Activated CD4-positive, alpha-beta T cell treated with anti-CD3 and anti-CD28 coated beads for 36 hours (primary cell): ENCODE measurements at regions of chr19 and their contacts with region 1.

Region 1: DNA sequence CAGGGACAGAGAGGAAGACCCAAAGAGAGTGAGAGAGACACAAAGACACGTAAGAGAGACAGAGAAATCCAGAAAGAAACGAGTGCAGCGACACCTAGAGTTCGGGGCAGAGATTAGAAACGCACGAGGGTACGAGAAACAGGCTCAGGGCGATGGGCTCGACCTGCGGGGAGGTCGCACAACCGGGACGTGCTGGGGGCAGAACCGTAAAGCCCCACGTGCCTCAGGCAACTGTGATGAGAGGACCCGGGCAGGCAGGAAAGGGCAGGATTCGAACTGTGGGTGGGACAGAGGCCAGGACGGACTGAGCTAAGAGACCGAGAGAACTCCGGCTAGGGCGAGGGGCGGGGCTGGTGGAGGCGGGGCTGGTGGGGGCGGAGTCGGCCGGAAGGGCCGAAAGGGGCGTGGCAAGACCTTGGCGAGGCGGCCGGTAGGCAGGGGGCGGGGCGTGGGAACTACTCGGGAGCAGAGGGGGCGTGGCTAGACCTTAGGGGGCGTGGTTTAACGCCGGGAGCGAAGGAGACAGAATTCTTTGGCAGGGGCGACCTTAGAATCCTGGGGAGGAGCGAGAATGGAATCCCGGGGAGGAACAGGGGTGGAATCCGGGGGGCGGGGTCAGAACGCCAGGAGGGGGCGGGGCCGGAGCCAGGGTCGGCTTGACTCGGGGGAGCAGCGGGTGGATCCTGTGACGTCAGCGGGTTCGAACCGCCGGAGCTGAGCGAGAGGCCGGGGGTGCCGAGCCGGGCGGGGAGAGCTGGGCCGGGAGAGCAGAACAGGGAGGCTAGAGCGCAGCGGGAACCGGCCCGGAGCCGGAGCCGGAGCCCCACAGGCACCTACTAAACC is at the start of gene NECTIN2:
- DNase-seq: peak; percentile 98
- ATAC-seq: peak; percentile 77
- H3K4me3 Mint-ChIP-seq: peak within 1 kb of the TSS; percentile 73
- H3K27ac Mint-ChIP-seq: peak within 1 kb of the TSS; percentile 10
- H3K4me1 Mint-ChIP-seq: peaks cover 21% of the 10 kb centered on the region
- H3K27me3 Mint-ChIP-seq: peaks cover 21% of the 10 kb centered on the region
- total RNA-seq, gene NECTIN2: 0.80 to 0.93 TPM

Region 2: DNA sequence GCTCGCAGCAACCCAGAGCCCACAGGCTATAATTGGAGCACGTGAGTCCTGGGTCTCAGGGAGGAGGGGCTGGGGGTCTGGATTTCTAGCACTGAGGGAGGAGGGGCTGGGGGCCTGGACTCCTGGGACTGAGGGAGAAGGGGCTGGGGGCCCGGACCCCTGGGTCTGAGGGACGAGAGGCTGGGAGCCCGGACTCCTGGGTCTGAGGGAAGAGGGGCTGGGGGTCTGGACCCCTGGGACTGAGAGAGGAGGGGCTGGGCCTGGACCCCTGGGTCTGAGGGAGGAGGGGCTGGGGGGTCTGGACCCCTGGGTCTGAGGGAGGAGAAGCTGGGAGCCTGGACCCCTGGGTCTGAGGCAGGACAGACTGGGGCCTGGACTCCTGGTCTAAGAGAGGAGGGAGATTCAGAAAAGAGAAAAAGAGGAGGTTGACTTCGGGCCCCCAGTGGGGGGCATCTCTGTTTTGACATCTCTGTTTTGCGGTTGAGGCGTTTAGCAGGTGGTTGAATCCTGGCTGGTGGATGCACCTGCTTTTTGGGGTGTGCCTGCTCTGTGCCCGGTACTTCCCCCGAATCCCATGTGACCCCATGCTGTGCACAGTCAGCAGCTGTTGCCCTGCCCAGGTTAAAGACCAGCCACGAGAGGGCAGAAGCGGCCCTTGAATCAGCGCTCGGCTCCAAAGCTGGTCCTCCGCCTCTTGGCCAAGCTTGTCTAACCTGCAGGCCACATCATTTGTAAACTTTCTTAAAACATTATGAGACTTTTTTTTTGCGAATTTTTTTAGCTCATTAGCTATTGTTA is 191.7 kb before region 1 on chr19:
- CTCF ChIA-PET with region 1: no interaction called
- POLR2A ChIA-PET with region 1: no interaction called
- intact Hi-C with region 1: loop called in 1 of 2 experiments (anchors 1 kb)
- DNase-seq: peak; percentile 89
- ATAC-seq: peak; percentile 97
- H3K4me3 Mint-ChIP-seq: no peak overlapping the region
- H3K27ac Mint-ChIP-seq: no peak overlapping the region
- H3K4me1 Mint-ChIP-seq: peaks cover 11% of the 10 kb centered on the region
- H3K27me3 Mint-ChIP-seq: no peaks in the 10 kb centered on the region

Region 3: GRCh38 chr19:44746946-44747738 is 98.7 kb before region 1 on chr19:
- CTCF ChIA-PET with region 1: interaction called, 5 read pairs
- POLR2A ChIA-PET with region 1: no interaction called
- intact Hi-C with region 1: loop called in 1 of 2 experiments (anchors 1 kb)
- DNase-seq: peak; percentile 98
- ATAC-seq: peak; percentile 85
- H3K4me3 Mint-ChIP-seq: peak overlapping the region; percentile 91
- H3K27ac Mint-ChIP-seq: peak overlapping the region; percentile 95
- H3K4me1 Mint-ChIP-seq: peaks cover 43% of the 10 kb centered on the region
- H3K27me3 Mint-ChIP-seq: no peaks in the 10 kb centered on the region

Region 4: GRCh38 chr19:44777715-44778347 is 68.0 kb before region 1 on chr19 and contains the start of gene CBLC:
- CTCF ChIA-PET with region 1: no interaction called
- POLR2A ChIA-PET with region 1: no interaction called
- intact Hi-C with region 1: loop called in 1 of 2 experiments (anchors 5 kb)
- DNase-seq: no peak
- ATAC-seq: peak; percentile 36
- H3K4me3 Mint-ChIP-seq: no peak within 1 kb of the TSS
- H3K27ac Mint-ChIP-seq: no peak within 1 kb of the TSS
- H3K4me1 Mint-ChIP-seq: no peaks in the 10 kb centered on the region
- H3K27me3 Mint-ChIP-seq: no peaks in the 10 kb centered on the region
- total RNA-seq, gene CBLC: not detected

Region 5: GRCh38 chr19:44800461-44800860 is 45.4 kb before region 1 on chr19:
- CTCF ChIA-PET with region 1: no interaction called
- POLR2A ChIA-PET with region 1: no interaction called
- intact Hi-C with region 1: loop called (anchors 1 kb)
- DNase-seq: peak; percentile 92
- ATAC-seq: peak; percentile 98
- H3K4me3 Mint-ChIP-seq: no peak overlapping the region
- H3K27ac Mint-ChIP-seq: no peak overlapping the region
- H3K4me1 Mint-ChIP-seq: peaks cover 11% of the 10 kb centered on the region
- H3K27me3 Mint-ChIP-seq: no peaks in the 10 kb centered on the region

Region 6: GRCh38 chr19:44883922-44884321 is 38.1 kb after region 1 on chr19:
- CTCF ChIA-PET with region 1: no interaction called
- POLR2A ChIA-PET with region 1: no interaction called
- intact Hi-C with region 1: no loop called
- DNase-seq: no peak
- ATAC-seq: no peak
- H3K4me3 Mint-ChIP-seq: no peak overlapping the region
- H3K27ac Mint-ChIP-seq: no peak overlapping the region
- H3K4me1 Mint-ChIP-seq: peaks cover under 1% of the 10 kb centered on the region
- H3K27me3 Mint-ChIP-seq: no peaks in the 10 kb centered on the region

Region 7: DNA sequence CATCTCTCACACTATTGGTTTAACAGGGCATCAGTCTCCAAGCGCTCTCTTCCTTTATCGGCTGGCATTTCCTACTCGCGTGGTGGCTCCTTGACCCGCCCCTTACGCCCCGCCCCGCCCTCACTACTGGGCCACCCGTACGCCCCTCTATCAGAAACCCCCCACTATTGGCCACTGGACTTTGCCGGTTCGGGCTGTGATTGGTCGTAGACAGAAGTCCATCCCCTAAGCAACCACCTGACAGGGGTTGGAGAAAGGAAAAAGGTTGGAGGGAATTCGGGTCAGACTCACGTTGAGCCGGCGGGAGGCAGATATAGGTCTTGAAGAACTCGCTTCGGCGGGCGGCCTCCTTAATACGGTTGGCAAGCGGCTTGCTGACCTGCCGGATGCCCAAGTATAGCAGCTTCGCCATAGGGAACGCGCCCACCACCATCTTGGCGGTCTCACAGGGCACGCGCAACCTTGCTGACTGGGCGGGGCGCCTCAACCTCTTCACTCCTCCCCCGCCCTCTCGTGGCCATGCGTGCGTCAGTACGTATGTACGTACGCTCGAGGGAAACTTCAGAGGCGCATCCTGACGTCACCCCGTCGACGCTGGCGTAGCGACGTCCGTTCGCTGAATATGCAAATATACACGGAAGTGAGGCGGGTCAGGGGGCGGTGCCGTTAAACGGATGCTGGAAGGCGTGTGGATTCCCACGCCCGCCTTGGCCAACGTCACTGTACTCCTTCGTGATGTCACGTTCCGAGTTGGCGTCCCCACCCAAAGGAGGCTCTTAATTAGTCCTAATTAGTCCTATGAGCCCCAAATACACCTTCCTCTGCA is 738.7 kb after region 1 on chr19 and contains the start of gene OPA3:
- CTCF ChIA-PET with region 1: no interaction called
- POLR2A ChIA-PET with region 1: no interaction called
- intact Hi-C with region 1: no loop called
- DNase-seq: peak; percentile 100
- ATAC-seq: peak; percentile 95
- H3K4me3 Mint-ChIP-seq: peak within 1 kb of the TSS; percentile 87
- H3K27ac Mint-ChIP-seq: peak within 1 kb of the TSS; percentile 93
- H3K4me1 Mint-ChIP-seq: peaks cover 22% of the 10 kb centered on the region
- H3K27me3 Mint-ChIP-seq: peaks cover 2% of the 10 kb centered on the region
- total RNA-seq, gene OPA3: 13.8 to 14.4 TPM